PC-3 (cell line): ENCODE measurements at regions of chr12 and their contacts with region 1.

Region 1: DNA sequence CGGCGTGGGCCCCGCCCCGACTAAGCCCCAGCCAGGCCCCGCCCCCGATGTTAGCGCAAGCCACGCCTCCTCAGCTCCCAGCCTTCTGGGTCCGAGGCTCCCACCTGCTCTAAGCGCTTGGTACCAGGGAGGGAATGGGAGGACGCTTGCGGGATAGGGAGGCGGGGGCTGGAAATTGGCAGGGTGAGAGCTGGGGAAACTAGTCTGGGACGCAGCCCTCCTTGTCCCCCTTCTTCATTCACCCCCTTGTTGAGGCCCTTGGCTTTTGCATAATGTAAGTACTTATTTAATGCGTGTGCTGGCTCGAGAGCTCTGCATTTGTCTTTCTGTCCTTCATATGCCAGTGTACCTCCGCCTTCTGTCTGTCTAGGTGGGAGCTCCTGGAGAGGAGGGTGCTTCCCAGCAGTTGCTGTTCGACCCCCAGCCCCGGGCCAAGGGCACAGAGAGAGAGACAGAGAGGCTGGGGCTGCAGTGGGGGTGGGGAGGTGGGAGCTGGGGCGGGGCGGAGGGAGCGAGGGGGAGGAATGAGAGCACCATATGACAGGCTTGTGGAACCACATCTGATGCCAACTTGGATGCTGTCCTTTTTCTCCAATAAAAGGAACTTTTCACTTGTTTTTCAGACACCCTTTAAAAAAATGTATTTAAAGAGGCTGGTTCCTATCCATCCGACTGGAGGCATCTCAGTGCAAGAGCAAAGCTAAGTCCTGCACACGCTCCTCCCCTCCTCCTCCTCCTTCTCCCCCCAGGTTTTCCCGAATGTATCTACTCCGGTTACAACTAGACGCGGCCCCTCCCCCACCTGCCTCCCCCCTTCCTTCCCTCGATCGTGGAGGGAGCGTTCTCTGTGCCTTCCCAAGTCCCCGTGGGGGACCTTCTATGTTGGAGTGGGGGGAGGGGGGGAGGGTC is 25.6 kb upstream of the MAP1LC3B2 start:
- DNase-seq: peak; percentile 81
- ATAC-seq: peak; percentile 70
- H3K4me3 ChIP-seq: peak overlapping the region; percentile 68
- H3K27ac ChIP-seq: peak overlapping the region; percentile 52
- H3K4me1 ChIP-seq: peaks cover 30% of the 10 kb centered on the region
- H3K27me3 ChIP-seq: no peaks in the 10 kb centered on the region
- CTCF ChIP-seq: no peak

Region 2: DNA sequence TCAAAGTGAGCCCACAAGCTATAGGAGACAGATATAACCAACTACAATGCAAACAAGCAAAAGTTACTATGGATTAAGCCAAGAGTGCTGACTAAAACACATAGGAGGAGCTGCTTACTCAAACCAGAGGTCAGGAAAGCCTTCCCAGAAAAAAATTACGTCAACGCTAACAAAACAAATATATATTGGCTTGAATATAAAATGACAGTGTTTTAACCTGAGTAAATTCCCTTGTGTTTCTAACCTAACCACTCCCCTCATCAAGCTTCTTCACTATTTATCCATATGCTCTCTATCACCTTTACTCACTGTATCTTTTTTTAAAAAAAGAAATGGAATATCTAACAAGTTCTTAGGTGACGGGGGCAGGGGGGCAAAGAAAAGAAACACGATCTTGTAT is 372.0 kb before region 1 on chr12:
- CTCF ChIA-PET with region 1: interaction called, 18 read pairs
- POLR2A ChIA-PET with region 1: no interaction called
- intact Hi-C with region 1: no loop called
- DNase-seq: peak; percentile 90
- ATAC-seq: peak; percentile 74
- H3K4me3 ChIP-seq: peak overlapping the region; percentile 11; the same call in 1 of the 2 replicates
- H3K27ac ChIP-seq: peak overlapping the region; percentile 66
- H3K4me1 ChIP-seq: peaks cover 57% of the 10 kb centered on the region
- H3K27me3 ChIP-seq: no peaks in the 10 kb centered on the region
- CTCF ChIP-seq: no peak

Region 3: DNA sequence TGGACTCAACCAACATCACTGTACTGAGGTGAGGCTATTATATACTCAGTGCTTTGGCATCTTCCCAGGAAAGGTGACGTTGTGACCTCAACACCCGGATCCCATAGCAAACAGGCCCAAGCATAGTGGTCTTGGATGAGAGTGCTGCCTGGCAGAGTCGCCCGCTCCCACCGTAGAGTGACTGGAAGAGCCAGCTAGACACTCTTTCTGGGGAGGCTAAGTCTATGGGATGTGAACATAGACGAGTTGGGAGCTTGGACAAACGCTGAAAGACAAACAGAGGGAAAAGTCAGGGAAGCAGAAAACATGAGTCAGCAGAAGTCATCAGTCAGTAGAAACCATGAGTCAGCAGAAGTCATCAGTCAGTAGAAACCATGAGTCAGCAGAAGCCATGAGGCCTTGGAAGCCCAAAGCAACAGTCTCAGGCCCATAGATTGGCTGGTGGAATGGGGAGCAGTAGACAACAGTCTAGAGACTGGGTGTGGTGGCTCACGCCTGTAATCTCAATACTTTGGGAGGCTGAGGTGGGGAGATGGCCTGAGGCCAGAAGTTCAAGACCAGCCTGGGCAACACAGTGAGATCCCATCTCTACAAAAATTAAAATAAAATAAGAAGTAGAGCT is 40.8 kb before region 1 on chr12:
- CTCF ChIA-PET with region 1: no interaction called
- POLR2A ChIA-PET with region 1: interaction called, 21 read pairs
- intact Hi-C with region 1: loop called (anchors 2 kb)
- DNase-seq: peak; percentile 98
- ATAC-seq: peak; percentile 61
- H3K4me3 ChIP-seq: no peak overlapping the region
- H3K27ac ChIP-seq: peak overlapping the region; percentile 96
- H3K4me1 ChIP-seq: peaks cover 67% of the 10 kb centered on the region
- H3K27me3 ChIP-seq: no peaks in the 10 kb centered on the region
- CTCF ChIP-seq: no peak